CD8-positive, alpha-beta T cell (primary cell): ENCODE measurements at regions of chr9 and their contacts with region 1.

Region 1: GRCh38 chr9:7510199-7510598 is 289.4 kb downstream of the DMAC1 start:
- DNase-seq: no peak
- ATAC-seq: no peak
- H3K4me3 ChIP-seq: no peak overlapping the region
- H3K4me3 Mint-ChIP-seq: no peak overlapping the region
- H3K27ac ChIP-seq: no peak overlapping the region
- H3K27ac Mint-ChIP-seq: no peak overlapping the region
- H3K4me1 ChIP-seq: no peaks in the 10 kb centered on the region
- H3K4me1 Mint-ChIP-seq: no peaks in the 10 kb centered on the region
- H3K27me3 ChIP-seq: no peaks in the 10 kb centered on the region
- H3K27me3 Mint-ChIP-seq: no peaks in the 10 kb centered on the region
- CTCF ChIP-seq: no peak

Region 2: DNA sequence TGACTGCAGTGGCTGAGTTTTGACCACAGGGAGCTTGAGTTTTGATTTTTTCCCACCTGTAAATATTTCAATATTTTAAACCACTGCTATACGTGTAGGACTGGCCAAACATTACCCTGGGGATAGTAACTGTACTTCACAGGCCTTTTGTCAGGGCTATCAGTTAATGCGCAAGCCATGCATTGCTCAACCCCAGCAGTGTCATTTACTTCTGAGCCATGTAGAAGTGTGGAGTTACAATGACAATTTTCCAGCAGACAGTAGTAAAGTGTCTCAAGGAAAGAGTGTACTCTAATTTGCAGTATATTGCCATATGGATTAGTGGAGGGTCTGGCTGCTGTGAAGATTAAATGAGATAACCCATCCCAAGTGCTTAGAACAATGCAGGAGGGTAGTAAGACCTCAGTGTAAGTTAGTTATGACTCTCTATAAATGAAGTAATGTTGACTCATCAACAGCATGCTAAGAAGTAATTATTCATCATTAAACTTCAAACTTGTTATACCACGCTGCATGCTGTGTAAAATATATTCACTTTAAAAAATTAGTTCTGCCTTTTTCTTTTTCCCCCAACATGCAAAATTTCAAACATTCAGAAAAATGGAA is 263.2 kb before region 1 on chr9:
- CTCF ChIA-PET with region 1: no interaction called
- POLR2A ChIA-PET with region 1: no interaction called
- intact Hi-C with region 1: no loop called
- DNase-seq: no peak
- ATAC-seq: no peak
- H3K4me3 ChIP-seq: no peak overlapping the region
- H3K4me3 Mint-ChIP-seq: no peak overlapping the region
- H3K27ac ChIP-seq: no peak overlapping the region
- H3K27ac Mint-ChIP-seq: no peak overlapping the region
- H3K4me1 ChIP-seq: no peaks in the 10 kb centered on the region
- H3K4me1 Mint-ChIP-seq: no peaks in the 10 kb centered on the region
- H3K27me3 ChIP-seq: no peaks in the 10 kb centered on the region
- H3K27me3 Mint-ChIP-seq: no peaks in the 10 kb centered on the region
- CTCF ChIP-seq: no peak

Region 3: GRCh38 chr9:7491641-7492040 is 18.6 kb before region 1 on chr9:
- CTCF ChIA-PET with region 1: no interaction called
- POLR2A ChIA-PET with region 1: no interaction called
- intact Hi-C with region 1: loop called in 1 of 2 experiments (anchors 2 kb)
- DNase-seq: no peak
- ATAC-seq: no peak
- H3K4me3 ChIP-seq: no peak overlapping the region
- H3K4me3 Mint-ChIP-seq: no peak overlapping the region
- H3K27ac ChIP-seq: no peak overlapping the region
- H3K27ac Mint-ChIP-seq: no peak overlapping the region
- H3K4me1 ChIP-seq: no peaks in the 10 kb centered on the region
- H3K4me1 Mint-ChIP-seq: no peaks in the 10 kb centered on the region
- H3K27me3 ChIP-seq: no peaks in the 10 kb centered on the region
- H3K27me3 Mint-ChIP-seq: no peaks in the 10 kb centered on the region
- CTCF ChIP-seq: no peak